ENCODE measurements at regions of chr17 and their contacts with region 1.

Region 1: GRCh38 chr17:53792997-53793396 is 29.7 kb upstream of the KIF2B start:
- DNase-seq: no peak
- H3K4me3 ChIP-seq: no peak overlapping the region
- H3K27ac ChIP-seq: no peak overlapping the region
- H3K4me1 ChIP-seq: no peaks in the 10 kb centered on the region
- H3K27me3 ChIP-seq: no peaks in the 10 kb centered on the region
- CTCF ChIP-seq: no peak

Region 2: DNA sequence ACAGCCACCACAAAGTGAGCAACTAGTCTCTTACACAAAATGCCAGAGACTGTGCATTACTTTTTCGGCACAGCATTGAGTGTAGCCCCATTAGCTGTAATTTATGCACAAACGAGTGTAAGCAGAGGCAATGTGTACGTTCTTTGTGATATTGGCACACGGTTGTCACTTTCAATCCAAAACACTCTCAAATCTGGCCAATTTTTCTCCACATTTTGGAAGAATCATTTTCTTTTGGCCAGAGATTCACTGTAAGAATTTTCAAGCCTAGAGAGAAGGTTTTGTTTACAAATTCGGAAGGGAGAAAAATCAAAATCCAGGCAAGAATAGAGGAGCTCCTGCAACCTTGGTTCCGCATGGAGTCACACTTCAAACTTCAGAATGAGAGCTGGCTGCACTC is 14.3 kb after region 1 on chr17:
- intact Hi-C with region 1: no loop called
- DNase-seq: no peak
- H3K4me3 ChIP-seq: no peak overlapping the region
- H3K27ac ChIP-seq: no peak overlapping the region
- H3K4me1 ChIP-seq: no peaks in the 10 kb centered on the region
- H3K27me3 ChIP-seq: no peaks in the 10 kb centered on the region
- CTCF ChIP-seq: no peak

Region 3: DNA sequence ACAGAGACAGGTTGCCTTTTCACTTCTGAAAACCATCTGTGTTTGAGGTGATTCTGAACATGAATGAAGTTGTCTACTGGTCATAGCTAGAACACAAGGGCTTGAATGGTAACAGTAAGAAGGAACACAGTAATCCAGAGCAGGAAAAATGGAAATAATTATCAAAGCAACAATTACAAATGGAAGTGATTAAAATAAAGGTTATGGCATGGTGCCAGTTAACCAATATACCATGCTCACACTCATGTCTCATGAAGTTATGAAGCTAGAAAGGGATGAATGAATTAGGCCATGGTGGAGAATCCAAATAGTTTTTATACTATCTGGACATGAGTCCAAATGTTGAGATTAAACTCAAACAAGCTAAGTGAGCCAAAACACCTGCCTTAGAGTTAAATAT is 39.4 kb after region 1 on chr17:
- intact Hi-C with region 1: no loop called
- DNase-seq: no peak
- H3K4me3 ChIP-seq: no peak overlapping the region
- H3K27ac ChIP-seq: no peak overlapping the region
- H3K4me1 ChIP-seq: no peaks in the 10 kb centered on the region
- H3K27me3 ChIP-seq: no peaks in the 10 kb centered on the region
- CTCF ChIP-seq: no peak

Region 4: GRCh38 chr17:53844476-53845107 is 51.6 kb after region 1 on chr17:
- intact Hi-C with region 1: loop called (anchors 5 kb)
- DNase-seq: no peak
- H3K4me3 ChIP-seq: no peak overlapping the region
- H3K27ac ChIP-seq: no peak overlapping the region
- H3K4me1 ChIP-seq: no peaks in the 10 kb centered on the region
- H3K27me3 ChIP-seq: no peaks in the 10 kb centered on the region
- CTCF ChIP-seq: no peak

Region 5: DNA sequence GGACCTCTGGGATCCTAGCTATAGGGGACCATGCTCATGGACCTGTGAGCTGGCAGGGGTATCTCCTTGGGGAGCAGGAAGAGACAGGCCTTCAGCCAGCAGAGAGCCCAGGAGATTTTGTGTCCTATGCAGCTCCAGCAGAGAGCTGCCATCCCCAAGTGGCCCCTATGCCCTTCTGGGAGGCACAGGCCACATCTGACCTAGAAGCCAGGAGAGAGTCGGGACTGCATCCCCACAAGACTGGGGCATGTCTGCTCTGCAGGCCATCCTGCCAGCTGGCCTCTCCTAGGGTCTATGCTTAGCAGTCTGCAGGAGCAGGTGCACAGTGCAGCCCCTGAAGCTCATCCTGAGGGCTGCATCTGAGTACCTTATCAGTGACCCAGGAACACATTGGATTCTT is 309.2 kb after region 1 on chr17:
- intact Hi-C with region 1: no loop called
- DNase-seq: no peak
- H3K4me3 ChIP-seq: no peak overlapping the region
- H3K27ac ChIP-seq: no peak overlapping the region
- H3K4me1 ChIP-seq: no peaks in the 10 kb centered on the region
- H3K27me3 ChIP-seq: no peaks in the 10 kb centered on the region
- CTCF ChIP-seq: no peak